Activated CD4-positive, alpha-beta T cell treated with anti-CD3 and anti-CD28 coated beads for 36 hours (primary cell): ENCODE measurements at regions of chrX and their contacts with region 1.

Region 1: GRCh38 chrX:48574270-48575266 is at the start of gene RBM3:
- DNase-seq: peak; percentile 95
- ATAC-seq: peak; percentile 91
- H3K4me3 Mint-ChIP-seq: peak within 1 kb of the TSS; percentile 99
- H3K27ac Mint-ChIP-seq: peak within 1 kb of the TSS; percentile 100
- H3K4me1 Mint-ChIP-seq: peaks cover 25% of the 10 kb centered on the region
- H3K27me3 Mint-ChIP-seq: no peaks in the 10 kb centered on the region
- total RNA-seq, gene RBM3: 164 to 202 TPM

Region 2: DNA sequence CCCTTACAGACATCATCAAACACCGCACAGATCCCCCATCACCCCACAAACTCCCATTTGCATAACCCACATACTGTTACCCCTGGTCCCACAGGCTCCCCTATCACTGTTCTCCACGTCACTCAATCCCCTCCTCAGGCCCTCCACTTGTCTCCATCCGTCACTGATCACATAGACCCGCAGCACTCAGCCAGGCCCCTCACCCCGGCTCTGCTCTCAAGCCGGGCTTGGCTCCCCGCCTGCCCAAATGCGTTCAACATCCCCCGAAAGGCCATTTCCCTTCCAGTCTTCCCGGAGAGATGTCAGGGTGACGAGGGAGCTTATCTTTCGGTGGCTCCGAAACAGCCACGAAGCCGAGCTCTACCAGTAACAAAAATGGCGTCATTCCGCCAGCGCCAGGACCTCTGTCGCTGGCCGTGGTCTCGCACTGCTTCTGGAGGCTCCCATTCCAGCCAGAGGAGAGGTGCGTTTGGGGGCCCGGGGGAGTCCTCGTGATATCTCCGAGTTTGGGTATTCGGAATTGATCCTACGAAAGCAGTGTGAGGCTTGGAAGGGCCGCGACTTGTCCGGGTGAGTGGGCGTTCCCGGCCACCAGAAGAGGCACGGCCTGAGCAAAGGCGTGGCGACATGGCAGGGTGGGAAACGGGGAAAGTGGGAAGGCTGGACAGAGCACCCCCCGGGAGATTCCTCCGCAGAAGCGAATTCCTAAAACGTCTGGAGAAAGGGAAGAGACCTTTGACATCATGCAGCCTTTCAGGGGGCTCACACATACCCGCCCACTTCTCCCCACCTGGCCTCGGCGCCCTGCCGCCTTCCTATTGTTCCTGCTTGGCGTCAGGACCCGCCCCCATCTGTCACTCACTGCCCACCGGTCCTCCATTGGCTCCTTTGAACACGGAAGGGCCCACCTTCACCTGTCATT is 503.2 kb before region 1 on chrX and contains the start of gene ZNF630:
- CTCF ChIA-PET with region 1: no interaction called
- POLR2A ChIA-PET with region 1: no interaction called
- intact Hi-C with region 1: loop called in 1 of 2 experiments (anchors 2 kb)
- DNase-seq: peak; percentile 77
- ATAC-seq: peak; percentile 92
- H3K4me3 Mint-ChIP-seq: peak within 1 kb of the TSS; percentile 81
- H3K27ac Mint-ChIP-seq: peak within 1 kb of the TSS; percentile 90
- H3K4me1 Mint-ChIP-seq: peaks cover 7% of the 10 kb centered on the region
- H3K27me3 Mint-ChIP-seq: no peaks in the 10 kb centered on the region
- total RNA-seq, gene ZNF630: 1.7 to 1.8 TPM

Region 3: DNA sequence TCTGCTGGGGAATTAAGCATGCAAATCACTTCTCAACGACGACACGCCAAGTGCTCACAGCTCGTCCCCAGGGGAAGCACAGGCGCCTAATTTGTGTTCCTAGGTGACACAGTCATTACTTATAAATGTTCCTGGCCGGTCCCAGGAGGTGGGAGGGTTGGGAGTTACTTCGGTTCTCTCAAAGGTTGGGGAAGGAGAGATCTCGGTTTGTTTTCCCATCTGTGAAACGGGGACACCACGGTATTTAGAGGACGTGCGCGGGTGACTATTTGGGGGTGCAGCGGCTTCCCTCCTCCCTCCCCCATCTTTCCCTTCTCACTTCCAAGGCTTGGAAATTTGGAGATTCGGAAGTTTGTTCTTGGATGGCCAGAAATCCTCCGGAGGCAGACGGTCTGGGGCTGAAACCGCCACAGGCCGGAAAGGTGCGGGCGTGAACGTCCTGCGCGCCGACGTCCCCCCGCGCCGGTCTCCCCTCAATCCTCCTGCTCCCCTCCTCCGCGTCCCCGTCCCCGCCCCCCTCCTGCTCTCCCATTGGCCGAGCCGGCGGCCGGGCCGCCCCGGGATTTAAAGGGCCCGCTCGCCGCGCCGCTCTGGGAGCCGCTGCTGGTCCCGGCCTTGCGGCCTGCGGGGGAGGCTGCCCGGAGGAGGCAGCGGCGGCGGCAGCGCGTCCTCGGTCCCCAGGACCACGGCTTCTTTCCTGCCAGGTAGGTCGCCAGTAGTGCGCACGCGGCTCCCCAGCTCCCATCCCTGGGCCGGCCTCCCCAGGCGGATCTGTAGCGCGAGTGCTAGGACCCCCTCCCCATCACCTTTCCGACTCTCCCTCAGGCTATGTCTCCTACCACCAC is 65.9 kb before region 1 on chrX and contains the start of gene PORCN:
- CTCF ChIA-PET with region 1: no interaction called
- POLR2A ChIA-PET with region 1: no interaction called
- intact Hi-C with region 1: loop called in 1 of 2 experiments (anchors 2 kb)
- DNase-seq: peak; percentile 87
- ATAC-seq: peak; percentile 92
- H3K4me3 Mint-ChIP-seq: peak within 1 kb of the TSS; percentile 85
- H3K27ac Mint-ChIP-seq: peak within 1 kb of the TSS; percentile 83
- H3K4me1 Mint-ChIP-seq: peaks cover 13% of the 10 kb centered on the region
- H3K27me3 Mint-ChIP-seq: no peaks in the 10 kb centered on the region
- total RNA-seq, gene PORCN: 6.9 to 9.0 TPM

Region 4: GRCh38 chrX:48539345-48540027 is 35.1 kb before region 1 on chrX and contains the start of gene TBC1D25:
- CTCF ChIA-PET with region 1: interaction called, 8 read pairs
- POLR2A ChIA-PET with region 1: interaction called, 16 read pairs
- intact Hi-C with region 1: loop called (anchors 1 kb)
- DNase-seq: peak; percentile 98
- ATAC-seq: peak; percentile 80
- H3K4me3 Mint-ChIP-seq: peak within 1 kb of the TSS; percentile 87
- H3K27ac Mint-ChIP-seq: peak within 1 kb of the TSS; percentile 89
- H3K4me1 Mint-ChIP-seq: peaks cover 15% of the 10 kb centered on the region
- H3K27me3 Mint-ChIP-seq: no peaks in the 10 kb centered on the region
- total RNA-seq, gene TBC1D25: 13.2 to 15.2 TPM

Region 5: GRCh38 chrX:48597353-48598264 is 23.0 kb after region 1 on chrX and contains the start of gene WDR13:
- CTCF ChIA-PET with region 1: no interaction called
- POLR2A ChIA-PET with region 1: no interaction called
- intact Hi-C with region 1: loop called (anchors 1 kb)
- DNase-seq: peak; percentile 94
- ATAC-seq: peak; percentile 91
- H3K4me3 Mint-ChIP-seq: peak within 1 kb of the TSS; percentile 99
- H3K27ac Mint-ChIP-seq: peak within 1 kb of the TSS; percentile 98
- H3K4me1 Mint-ChIP-seq: peaks cover 8% of the 10 kb centered on the region
- H3K27me3 Mint-ChIP-seq: no peaks in the 10 kb centered on the region
- total RNA-seq, gene WDR13: 27.2 to 39.4 TPM

Region 6: DNA sequence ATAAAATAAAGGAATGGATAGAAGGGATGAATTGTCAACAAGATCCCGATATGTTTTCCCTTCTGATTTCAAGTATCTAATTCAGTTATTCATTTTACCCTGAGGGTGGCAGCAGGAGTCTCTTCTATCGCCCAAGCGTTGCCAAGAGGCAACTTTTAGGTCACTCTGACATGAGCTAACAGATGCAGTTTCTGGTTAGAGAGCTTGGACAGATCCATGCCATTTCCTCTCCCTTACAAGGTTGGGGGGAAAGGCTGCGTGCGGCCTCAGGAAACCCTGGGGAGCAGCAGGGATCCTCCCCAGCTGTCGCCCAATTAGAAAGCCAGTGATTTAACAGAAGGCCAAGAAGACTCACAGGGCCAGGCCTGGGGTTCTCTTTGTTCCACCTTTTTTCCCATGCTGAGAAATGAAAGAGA is 73.8 kb after region 1 on chrX:
- CTCF ChIA-PET with region 1: no interaction called
- POLR2A ChIA-PET with region 1: no interaction called
- intact Hi-C with region 1: no loop called
- DNase-seq: peak; percentile 47
- ATAC-seq: peak; percentile 64
- H3K4me3 Mint-ChIP-seq: no peak overlapping the region
- H3K27ac Mint-ChIP-seq: no peak overlapping the region
- H3K4me1 Mint-ChIP-seq: peaks cover 6% of the 10 kb centered on the region
- H3K27me3 Mint-ChIP-seq: no peaks in the 10 kb centered on the region

Region 7: GRCh38 chrX:48957827-48958634 is 383.5 kb after region 1 on chrX:
- CTCF ChIA-PET with region 1: no interaction called
- POLR2A ChIA-PET with region 1: no interaction called
- intact Hi-C with region 1: loop called in 1 of 2 experiments (anchors 1 kb)
- DNase-seq: peak; percentile 95
- ATAC-seq: peak; percentile 92
- H3K4me3 Mint-ChIP-seq: peak overlapping the region; percentile 93
- H3K27ac Mint-ChIP-seq: peak overlapping the region; percentile 100
- H3K4me1 Mint-ChIP-seq: peaks cover 28% of the 10 kb centered on the region
- H3K27me3 Mint-ChIP-seq: no peaks in the 10 kb centered on the region

Region 8: DNA sequence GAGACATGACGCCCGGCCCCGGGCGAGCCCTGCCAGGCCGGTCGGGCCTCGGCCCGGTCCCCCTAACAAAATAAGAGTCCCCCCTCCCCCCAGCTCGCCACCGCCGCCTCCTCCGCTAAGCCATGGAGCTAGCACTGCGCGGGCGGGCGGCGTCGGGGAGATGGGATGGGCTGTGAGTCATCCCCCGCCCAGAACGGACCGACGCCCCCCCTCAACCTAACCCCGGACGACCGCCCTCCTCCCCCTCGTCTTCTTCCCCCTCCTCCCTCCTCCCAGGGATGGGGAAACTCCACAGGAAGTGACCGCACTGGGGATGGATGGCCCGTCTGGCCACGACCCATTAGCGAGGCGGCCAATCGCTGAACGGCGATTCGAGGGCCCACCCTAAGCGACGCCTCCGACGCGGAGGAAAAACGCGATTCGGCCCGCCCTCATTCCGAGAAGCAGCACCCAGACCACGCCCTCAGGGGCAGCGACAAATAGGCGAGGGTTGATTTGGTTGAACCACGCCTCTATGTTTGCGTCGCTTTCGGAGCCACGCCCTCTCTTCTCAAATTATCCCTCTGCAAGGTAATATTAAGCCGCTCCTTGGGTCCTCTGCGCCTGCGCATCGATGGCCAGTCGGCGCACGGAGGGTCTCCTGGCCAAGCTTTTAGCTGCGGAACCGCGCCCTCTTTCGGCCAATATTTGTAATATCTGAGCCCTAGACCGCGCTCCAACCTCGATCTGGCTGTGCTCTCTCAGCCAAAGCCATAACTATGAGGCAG is 468.8 kb after region 1 on chrX and contains the start of gene TFE3:
- CTCF ChIA-PET with region 1: no interaction called
- POLR2A ChIA-PET with region 1: no interaction called
- intact Hi-C with region 1: loop called in 1 of 2 experiments (anchors 1 kb)
- DNase-seq: peak; percentile 97
- ATAC-seq: peak; percentile 91
- H3K4me3 Mint-ChIP-seq: peak within 1 kb of the TSS; percentile 93
- H3K27ac Mint-ChIP-seq: peak within 1 kb of the TSS; percentile 94
- H3K4me1 Mint-ChIP-seq: peaks cover 41% of the 10 kb centered on the region
- H3K27me3 Mint-ChIP-seq: no peaks in the 10 kb centered on the region
- total RNA-seq, gene TFE3: 27.1 to 27.5 TPM